HCT116 (cell line): ENCODE measurements at regions of chr2 and their contacts with region 1.

Region 1: DNA sequence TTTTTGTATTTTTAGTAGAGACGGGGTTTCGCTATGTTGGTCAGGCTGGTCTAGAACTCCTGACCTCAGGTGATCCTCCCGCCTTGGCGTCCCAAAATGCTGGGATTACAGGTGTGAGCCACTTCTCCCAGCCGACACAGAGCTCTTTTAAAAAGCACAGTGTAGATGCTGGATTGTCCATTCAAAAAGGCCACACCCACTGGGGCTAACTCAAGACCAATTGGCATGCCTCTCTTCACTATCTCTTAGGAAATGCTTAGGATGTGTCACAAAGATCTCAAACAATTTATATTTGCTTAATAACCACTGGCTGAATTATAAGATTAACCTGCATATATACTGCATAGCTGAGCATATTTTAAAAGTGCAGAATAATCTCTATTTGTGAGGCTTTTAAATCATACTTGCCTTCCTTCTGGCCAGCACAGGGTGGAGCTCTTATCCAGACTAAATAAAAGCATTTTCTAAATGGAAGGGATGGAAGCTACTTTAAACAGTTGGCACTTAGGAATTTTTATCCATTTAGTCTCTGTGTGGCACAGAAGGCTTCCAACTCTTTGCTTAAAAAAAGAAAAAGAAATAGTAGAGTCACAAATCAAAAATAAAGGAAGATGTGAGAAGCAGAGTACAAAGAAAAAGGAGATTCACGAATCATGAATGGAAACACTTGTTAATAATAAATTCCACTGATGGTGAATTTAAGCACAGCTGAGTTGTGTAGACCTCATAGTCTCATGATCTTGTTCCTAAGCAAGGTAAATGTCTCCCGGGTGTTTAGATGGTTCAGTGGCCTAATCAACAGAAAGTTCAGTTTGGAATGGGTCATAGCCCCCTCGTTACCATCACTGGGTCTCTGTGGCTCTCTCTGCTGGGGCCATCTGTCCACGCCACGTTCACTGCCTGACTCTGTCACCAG is 22.4 kb downstream of the CRYGD start:
- DNase-seq: peak; percentile 39
- ATAC-seq: peak; percentile 91
- H3K4me3 ChIP-seq: no peak overlapping the region
- H3K27ac ChIP-seq: no peak overlapping the region
- H3K4me1 ChIP-seq: peaks cover 0 to 5% of the 10 kb centered on the region in 2 experiments; a peak in 1 of 4 replicates
- H3K27me3 ChIP-seq: no peaks in the 10 kb centered on the region
- CTCF ChIP-seq: peak; percentile 51 to 74 (median 67)
- POLR2A ChIP-seq: no peak
- RAD21 ChIP-seq: peak; percentile 83

Region 2: DNA sequence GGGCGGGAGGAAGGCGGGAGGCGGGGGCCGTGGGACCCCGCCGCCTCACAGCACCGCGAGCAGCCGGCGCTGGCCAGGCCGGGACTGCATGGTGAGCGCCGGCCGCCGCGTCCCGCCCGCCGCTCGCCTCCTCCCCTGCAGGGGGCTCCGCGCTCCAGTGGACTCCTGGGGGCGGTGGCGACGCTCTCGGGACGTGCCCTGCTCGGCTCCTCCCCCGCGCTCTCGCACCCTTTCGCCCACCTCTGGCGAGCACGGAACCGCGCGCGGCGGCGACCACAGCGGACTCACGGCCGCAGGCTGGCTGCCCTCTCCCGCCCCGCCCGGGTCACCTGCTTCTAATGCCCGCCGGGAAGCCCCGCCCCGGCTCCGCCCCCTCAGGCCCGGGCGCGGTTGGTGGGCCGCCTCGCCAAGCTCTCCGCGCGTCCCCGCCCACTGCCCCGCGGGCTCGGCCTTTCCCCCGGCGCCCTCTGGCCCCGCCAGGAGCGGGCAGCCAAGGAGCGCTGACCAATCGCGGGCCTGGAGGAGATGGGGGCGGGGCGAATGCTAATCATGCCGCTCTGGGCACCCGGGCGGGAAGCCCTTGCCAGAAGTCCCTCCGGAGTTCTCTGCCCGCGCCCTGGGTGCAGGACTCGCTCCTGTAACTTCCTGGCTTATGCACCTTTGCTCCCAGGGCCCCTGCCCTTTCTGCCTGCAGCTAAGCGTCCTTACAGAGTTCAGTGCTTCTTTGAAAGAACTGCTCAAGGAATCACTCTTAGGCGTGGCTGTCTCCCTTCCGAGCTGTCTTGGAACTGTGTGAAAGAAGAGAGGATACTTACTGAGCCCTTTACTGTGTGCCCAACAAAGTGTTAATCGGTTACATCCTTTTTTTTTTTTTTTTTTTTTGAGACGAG is 332.1 kb before region 1 on chr2 and contains the start of gene FZD5:
- CTCF ChIA-PET with region 1: no interaction called
- POLR2A ChIA-PET with region 1: no interaction called
- RAD21 ChIA-PET with region 1: no interaction called
- intact Hi-C with region 1: no loop called
- DNase-seq: peak; percentile 85
- ATAC-seq: peak; percentile 91
- H3K4me3 ChIP-seq: peak within 1 kb of the TSS; percentile 69 to 83
- H3K27ac ChIP-seq: peak within 1 kb of the TSS; percentile 73
- H3K4me1 ChIP-seq: peaks cover 4 to 16% of the 10 kb centered on the region in 2 experiments; a peak in 3 of 4 replicates
- H3K27me3 ChIP-seq: no peaks in the 10 kb centered on the region
- CTCF ChIP-seq: peak; percentile 24 to 47 (median 33); a peak in 3 of 6 replicates
- POLR2A ChIP-seq: peak; percentile 57
- RAD21 ChIP-seq: peak; percentile 82
- total RNA-seq, gene FZD5: 9.0 TPM

Region 3: GRCh38 chr2:208164951-208165755 is 63.2 kb after region 1 on chr2:
- CTCF ChIA-PET with region 1: no interaction called
- POLR2A ChIA-PET with region 1: no interaction called
- RAD21 ChIA-PET with region 1: no interaction called
- intact Hi-C with region 1: loop called (anchors 5 kb)
- DNase-seq: no peak
- ATAC-seq: no peak
- H3K4me3 ChIP-seq: no peak overlapping the region
- H3K27ac ChIP-seq: no peak overlapping the region
- H3K4me1 ChIP-seq: peaks cover 4 to 10% of the 10 kb centered on the region in 2 experiments; a peak in 2 of 4 replicates
- H3K27me3 ChIP-seq: no peaks in the 10 kb centered on the region
- CTCF ChIP-seq: no peak
- POLR2A ChIP-seq: no peak
- RAD21 ChIP-seq: no peak

Region 4: GRCh38 chr2:208254871-208255556 is 153.0 kb after region 1 on chr2 and contains the start of gene IDH1:
- CTCF ChIA-PET with region 1: interaction called, 44 read pairs
- POLR2A ChIA-PET with region 1: interaction called, 8 read pairs
- RAD21 ChIA-PET with region 1: interaction called, 8 to 12 read pairs
- intact Hi-C with region 1: loop called (anchors 1 kb)
- DNase-seq: peak; percentile 87
- ATAC-seq: peak; percentile 79
- H3K4me3 ChIP-seq: peak within 1 kb of the TSS; percentile 79 to 80
- H3K27ac ChIP-seq: peak within 1 kb of the TSS; percentile 73
- H3K4me1 ChIP-seq: peaks cover 10 to 20% of the 10 kb centered on the region in 2 experiments; a peak in 3 of 4 replicates
- H3K27me3 ChIP-seq: no peaks in the 10 kb centered on the region
- CTCF ChIP-seq: peak; percentile 60 to 64 (median 62); a peak in 5 of 6 replicates
- POLR2A ChIP-seq: no peak
- RAD21 ChIP-seq: peak; percentile 61
- total RNA-seq, gene IDH1: 91.2 TPM

Region 5: DNA sequence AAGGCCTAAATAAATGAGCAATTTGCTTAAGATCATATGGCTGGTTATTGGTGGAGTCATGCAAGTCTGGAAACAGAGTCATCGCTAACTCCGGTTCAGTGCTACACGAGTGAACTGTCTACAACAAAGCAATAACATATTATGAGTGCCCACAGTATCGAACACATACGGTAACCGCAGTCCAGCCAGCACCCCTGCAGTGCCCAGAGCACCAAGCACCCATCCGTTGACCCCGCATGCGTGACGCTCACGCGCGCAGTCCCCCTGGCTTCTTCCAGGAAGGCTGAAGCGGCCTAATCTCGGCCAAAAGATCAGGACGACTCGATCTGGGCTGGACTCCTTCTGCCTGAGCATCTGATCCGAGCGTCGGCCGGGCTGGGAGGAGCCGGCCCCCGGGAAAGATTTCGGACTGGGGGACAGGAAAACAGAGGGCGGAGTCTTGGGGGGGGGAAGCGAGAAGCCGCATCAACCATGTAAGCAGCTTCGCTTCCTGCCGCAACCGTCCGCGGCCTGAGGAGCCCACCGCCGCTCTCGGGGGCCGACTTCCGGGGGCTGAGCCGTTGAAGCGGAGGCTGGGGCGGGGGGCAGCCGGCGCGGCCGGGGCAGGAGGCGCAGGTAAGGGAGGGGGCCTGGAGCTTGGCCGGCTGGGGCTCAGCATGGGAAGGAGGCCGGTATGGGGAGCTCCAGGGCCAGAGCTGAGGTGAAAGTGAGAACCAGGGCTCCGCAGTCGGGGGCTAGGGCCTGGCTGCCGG is 164.0 kb after region 1 on chr2 and contains the start of gene PIKFYVE:
- CTCF ChIA-PET with region 1: interaction called, 13 read pairs
- POLR2A ChIA-PET with region 1: no interaction called
- RAD21 ChIA-PET with region 1: no interaction called
- intact Hi-C with region 1: no loop called
- DNase-seq: peak; percentile 96
- ATAC-seq: peak; percentile 91
- H3K4me3 ChIP-seq: peak within 1 kb of the TSS; percentile 90 to 91
- H3K27ac ChIP-seq: peak within 1 kb of the TSS; percentile 62
- H3K4me1 ChIP-seq: peaks cover 10 to 29% of the 10 kb centered on the region in 2 experiments
- H3K27me3 ChIP-seq: no peaks in the 10 kb centered on the region
- CTCF ChIP-seq: no peak
- POLR2A ChIP-seq: no peak
- RAD21 ChIP-seq: no peak
- total RNA-seq, gene PIKFYVE: 21.8 TPM

Region 6: DNA sequence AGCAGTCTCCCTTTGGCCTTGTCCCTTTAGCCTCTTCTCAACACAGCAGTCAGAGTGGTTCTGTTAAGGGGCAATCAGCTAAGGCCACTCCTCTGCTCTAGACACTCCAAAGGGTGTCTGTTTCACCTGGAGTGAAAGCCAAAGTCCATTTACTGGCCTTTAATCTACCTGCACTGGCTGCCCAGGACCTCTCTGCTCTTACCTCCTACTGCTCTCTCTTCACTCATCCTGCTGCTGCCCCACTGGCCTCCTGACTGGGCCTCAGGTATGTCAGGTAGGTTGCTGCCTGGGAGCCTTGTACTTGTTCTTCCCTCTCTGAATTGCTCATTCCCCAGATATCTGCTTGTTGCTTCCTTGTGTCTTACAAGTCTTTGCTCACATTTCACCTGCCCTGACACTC is 232.3 kb after region 1 on chr2:
- CTCF ChIA-PET with region 1: no interaction called
- POLR2A ChIA-PET with region 1: no interaction called
- RAD21 ChIA-PET with region 1: no interaction called
- intact Hi-C with region 1: loop called (anchors 10 kb)
- DNase-seq: no peak
- ATAC-seq: no peak
- H3K4me3 ChIP-seq: no peak overlapping the region
- H3K27ac ChIP-seq: no peak overlapping the region
- H3K4me1 ChIP-seq: no peaks in the 10 kb centered on the region
- H3K27me3 ChIP-seq: no peaks in the 10 kb centered on the region
- CTCF ChIP-seq: no peak
- POLR2A ChIP-seq: no peak
- RAD21 ChIP-seq: no peak